HCT116 (cell line): ENCODE measurements at regions of chr10 and their contacts with region 1.

Region 1: DNA sequence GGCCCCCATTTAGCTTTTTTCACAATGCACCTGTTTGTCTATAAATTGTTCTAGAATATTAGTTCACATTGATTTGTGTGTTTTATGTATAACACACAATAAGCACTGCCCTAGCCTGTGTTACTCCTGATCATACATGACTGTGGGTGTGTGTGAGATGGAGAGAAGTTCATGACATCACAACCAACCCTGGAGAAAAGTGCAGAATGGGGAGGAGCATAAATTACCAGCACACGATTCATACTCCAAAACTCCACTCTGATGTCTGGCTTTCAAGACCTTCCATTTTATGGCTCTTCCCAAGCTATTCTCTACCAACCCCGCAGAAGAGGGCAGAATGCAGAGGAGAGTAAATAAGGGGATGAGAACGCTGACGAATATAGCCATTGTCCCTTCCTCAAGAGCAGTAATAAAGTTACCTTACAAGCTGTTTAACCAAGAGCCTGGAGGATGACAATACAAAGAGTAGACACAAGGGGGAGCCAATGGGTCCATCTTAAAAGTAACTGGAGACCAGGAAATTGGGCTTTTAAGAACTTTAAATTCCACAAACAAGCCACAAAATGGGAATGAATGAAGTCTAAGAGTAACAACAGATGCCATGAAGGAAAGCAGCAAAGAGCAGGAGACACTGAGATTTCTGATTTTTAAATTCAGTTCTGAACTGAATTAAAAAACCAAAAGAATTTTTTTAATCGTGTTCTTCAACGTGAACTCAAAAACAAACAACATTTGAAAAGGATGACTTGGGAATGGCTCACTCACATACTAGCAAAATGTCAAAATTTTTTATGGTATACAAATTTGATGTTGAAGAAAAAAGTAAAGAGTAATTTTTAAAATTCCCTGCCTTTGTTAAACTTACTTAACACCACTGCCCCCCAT is 159.6 kb downstream of the PARD3 start:
- DNase-seq: peak; percentile 63
- ATAC-seq: peak; percentile 86
- H3K4me3 ChIP-seq: no peak overlapping the region
- H3K27ac ChIP-seq: no peak overlapping the region
- H3K4me1 ChIP-seq: peaks cover 2 to 7% of the 10 kb centered on the region in 2 experiments; a peak in 1 of 4 replicates
- H3K27me3 ChIP-seq: no peaks in the 10 kb centered on the region
- CTCF ChIP-seq: peak; percentile 40 to 81 (median 76); a peak in 5 of 6 replicates
- POLR2A ChIP-seq: no peak
- RAD21 ChIP-seq: peak; percentile 60

Region 2: GRCh38 chr10:34644224-34644623 is 11.3 kb before region 1 on chr10:
- CTCF ChIA-PET with region 1: interaction called, 12 read pairs
- POLR2A ChIA-PET with region 1: no interaction called
- RAD21 ChIA-PET with region 1: no interaction called
- intact Hi-C with region 1: no loop called
- DNase-seq: no peak
- ATAC-seq: no peak
- H3K4me3 ChIP-seq: no peak overlapping the region
- H3K27ac ChIP-seq: no peak overlapping the region
- H3K4me1 ChIP-seq: no peaks in the 10 kb centered on the region
- H3K27me3 ChIP-seq: no peaks in the 10 kb centered on the region
- CTCF ChIP-seq: no peak
- POLR2A ChIP-seq: no peak
- RAD21 ChIP-seq: no peak

Region 3: GRCh38 chr10:34960983-34961382 is 305.5 kb after region 1 on chr10:
- CTCF ChIA-PET with region 1: no interaction called
- POLR2A ChIA-PET with region 1: no interaction called
- RAD21 ChIA-PET with region 1: no interaction called
- intact Hi-C with region 1: loop called (anchors 5 kb)
- DNase-seq: no peak
- ATAC-seq: peak; percentile 60; the same call in 1 of the 2 replicates
- H3K4me3 ChIP-seq: no peak overlapping the region
- H3K27ac ChIP-seq: no peak overlapping the region
- H3K4me1 ChIP-seq: no peaks in the 10 kb centered on the region
- H3K27me3 ChIP-seq: no peaks in the 10 kb centered on the region
- CTCF ChIP-seq: peak; percentile 10 to 28 (median 14); a peak in 1 of 6 replicates
- POLR2A ChIP-seq: no peak
- RAD21 ChIP-seq: peak; percentile 66

Region 4: GRCh38 chr10:35218339-35218955 is 562.9 kb after region 1 on chr10:
- CTCF ChIA-PET with region 1: no interaction called
- POLR2A ChIA-PET with region 1: no interaction called
- RAD21 ChIA-PET with region 1: interaction called in 1 of 2 experiments, 5 read pairs
- intact Hi-C with region 1: loop called (anchors 5 kb)
- DNase-seq: peak; percentile 86
- ATAC-seq: peak; percentile 86
- H3K4me3 ChIP-seq: no peak overlapping the region
- H3K27ac ChIP-seq: no peak overlapping the region
- H3K4me1 ChIP-seq: peaks cover 0 to 13% of the 10 kb centered on the region in 2 experiments; a peak in 3 of 4 replicates
- H3K27me3 ChIP-seq: no peaks in the 10 kb centered on the region
- CTCF ChIP-seq: peak; percentile 68 to 93 (median 92)
- POLR2A ChIP-seq: no peak
- RAD21 ChIP-seq: peak; percentile 85